ENCODE measurements at regions of chr3 and their contacts with region 1.

Region 1: GRCh38 chr3:181700168-181701087 is 11.3 kb upstream of the SOX2 start:
- DNase-seq: peak; percentile 87
- H3K4me3 ChIP-seq: peak overlapping the region in 1 of 2 experiments; percentile 8; a peak in 1 of 4 replicates
- H3K27ac ChIP-seq: no peak overlapping the region
- H3K4me1 ChIP-seq: peaks cover 0 to 11% of the 10 kb centered on the region in 2 experiments; a peak in 2 of 4 replicates
- H3K27me3 ChIP-seq: no peaks in the 10 kb centered on the region
- CTCF ChIP-seq: peak; percentile 87
- EP300 ChIP-seq: no peak
- RAD21 ChIP-seq: peak; percentile 87

Region 2: DNA sequence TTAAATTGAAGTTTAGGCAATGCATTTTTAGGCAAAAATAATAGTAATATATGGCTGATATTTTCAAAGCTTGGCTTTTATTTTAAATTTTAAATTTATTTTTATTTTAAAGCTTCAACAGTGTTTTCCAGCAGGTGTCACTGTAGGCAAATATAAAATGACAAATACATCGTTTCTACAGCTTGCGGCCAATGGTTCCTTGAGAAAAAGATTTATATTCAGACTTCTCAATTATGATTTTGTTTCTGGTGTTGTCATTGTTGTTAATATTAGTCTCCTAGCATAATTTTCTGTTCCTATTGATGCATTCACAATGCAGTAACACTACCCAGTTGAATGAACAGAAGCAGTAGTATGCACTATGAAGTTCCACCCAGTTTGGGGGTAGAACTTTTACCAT is 490.2 kb before region 1 on chr3:
- CTCF ChIA-PET with region 1: interaction called, 31 read pairs
- POLR2A ChIA-PET with region 1: no interaction called
- DNase-seq: peak; percentile 8
- H3K4me3 ChIP-seq: no peak overlapping the region
- H3K27ac ChIP-seq: no peak overlapping the region
- H3K4me1 ChIP-seq: no peaks in the 10 kb centered on the region; a peak in 1 of 4 replicates
- H3K27me3 ChIP-seq: no peaks in the 10 kb centered on the region
- CTCF ChIP-seq: peak; percentile 60
- EP300 ChIP-seq: no peak
- RAD21 ChIP-seq: peak; percentile 80

Region 3: DNA sequence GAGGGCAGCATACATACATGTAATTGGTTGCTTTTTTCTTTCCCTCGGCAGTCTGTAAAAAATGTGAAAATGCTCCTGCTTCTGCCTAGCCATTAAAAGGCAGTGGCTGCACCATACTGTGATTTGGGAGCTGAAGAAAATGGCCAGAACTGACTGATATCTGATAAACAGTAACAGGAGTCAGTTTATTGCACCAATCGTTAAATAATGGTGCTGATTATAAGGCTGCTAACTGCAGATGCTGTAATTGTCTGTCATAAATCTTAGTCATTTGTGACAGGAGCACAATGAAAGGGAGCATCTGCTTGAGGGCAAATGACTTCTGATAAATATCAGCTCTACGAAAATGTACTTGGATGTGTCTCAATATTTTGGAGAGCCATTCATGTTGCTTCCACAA is 447.8 kb before region 1 on chr3:
- CTCF ChIA-PET with region 1: interaction called, 18 read pairs
- POLR2A ChIA-PET with region 1: no interaction called
- DNase-seq: peak; percentile 68
- H3K4me3 ChIP-seq: no peak overlapping the region
- H3K27ac ChIP-seq: peak overlapping the region in 1 of 2 experiments; percentile 96; a peak in 2 of 4 replicates
- H3K4me1 ChIP-seq: peaks cover 0 to 13% of the 10 kb centered on the region in 2 experiments; a peak in 2 of 4 replicates
- H3K27me3 ChIP-seq: no peaks in the 10 kb centered on the region
- CTCF ChIP-seq: no peak
- EP300 ChIP-seq: peak in 1 of 2 experiments; percentile 98; a peak in 2 of 4 replicates
- RAD21 ChIP-seq: peak; percentile 26

Region 4: GRCh38 chr3:181326637-181327223 is 373.7 kb before region 1 on chr3:
- CTCF ChIA-PET with region 1: interaction called, 76 read pairs
- POLR2A ChIA-PET with region 1: no interaction called
- DNase-seq: no peak
- H3K4me3 ChIP-seq: no peak overlapping the region
- H3K27ac ChIP-seq: no peak overlapping the region
- H3K4me1 ChIP-seq: peaks cover 0 to 10% of the 10 kb centered on the region in 2 experiments; a peak in 2 of 4 replicates
- H3K27me3 ChIP-seq: no peaks in the 10 kb centered on the region
- CTCF ChIP-seq: peak; percentile 80
- EP300 ChIP-seq: no peak
- RAD21 ChIP-seq: peak; percentile 75

Region 5: DNA sequence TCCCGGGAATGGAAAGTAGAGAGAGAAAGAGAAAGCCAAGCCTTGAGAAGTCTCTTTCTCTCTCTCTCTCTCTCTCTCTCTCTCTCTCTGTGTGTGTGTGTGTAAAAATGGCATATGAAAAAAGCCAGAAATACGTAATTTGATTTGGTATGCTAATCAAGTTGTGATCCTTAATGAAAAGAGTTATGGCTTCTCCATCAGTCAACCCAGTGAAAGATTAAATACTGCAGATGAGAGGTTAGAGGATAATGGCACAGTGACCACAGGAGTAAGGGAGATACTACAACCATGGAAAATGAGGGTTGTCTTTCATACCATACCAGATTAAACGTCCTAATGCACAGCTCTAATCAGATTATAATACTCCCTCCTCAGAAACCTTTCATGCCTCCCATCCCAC is 182.2 kb before region 1 on chr3:
- CTCF ChIA-PET with region 1: interaction called, 11 read pairs
- POLR2A ChIA-PET with region 1: no interaction called
- DNase-seq: peak; percentile 45
- H3K4me3 ChIP-seq: no peak overlapping the region
- H3K27ac ChIP-seq: peak overlapping the region in 1 of 2 experiments; percentile 35; a peak in 2 of 4 replicates
- H3K4me1 ChIP-seq: peaks cover 0 to 6% of the 10 kb centered on the region in 2 experiments; a peak in 1 of 4 replicates
- H3K27me3 ChIP-seq: no peaks in the 10 kb centered on the region
- CTCF ChIP-seq: no peak
- EP300 ChIP-seq: peak in 1 of 2 experiments; percentile 76; a peak in 2 of 4 replicates
- RAD21 ChIP-seq: no peak

Region 6: GRCh38 chr3:181687190-181687589 is 13.2 kb before region 1 on chr3:
- CTCF ChIA-PET with region 1: interaction called, 35 read pairs
- POLR2A ChIA-PET with region 1: no interaction called
- DNase-seq: no peak
- H3K4me3 ChIP-seq: no peak overlapping the region
- H3K27ac ChIP-seq: no peak overlapping the region
- H3K4me1 ChIP-seq: no peaks in the 10 kb centered on the region; a peak in 1 of 4 replicates
- H3K27me3 ChIP-seq: no peaks in the 10 kb centered on the region
- CTCF ChIP-seq: no peak
- EP300 ChIP-seq: no peak
- RAD21 ChIP-seq: no peak

Region 7: DNA sequence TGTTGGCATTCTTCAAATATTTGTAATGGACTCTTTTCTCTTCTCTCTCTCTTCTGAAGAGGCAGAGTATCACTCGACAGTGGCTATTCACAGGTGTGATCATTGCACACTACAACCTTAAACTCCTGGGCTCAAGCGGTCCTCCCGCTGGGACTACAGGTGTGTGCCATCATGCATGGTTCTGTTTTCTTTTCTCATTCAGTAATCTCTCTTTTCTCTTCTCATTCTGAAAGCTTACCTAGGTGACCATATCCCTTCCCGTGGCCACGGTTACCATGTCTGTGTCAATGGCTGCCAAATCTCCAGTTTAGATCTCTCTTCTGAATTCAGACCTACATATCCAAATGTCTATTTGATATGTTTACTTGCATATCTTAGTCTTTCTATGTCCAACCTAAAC is 107.6 kb after region 1 on chr3:
- CTCF ChIA-PET with region 1: no interaction called
- POLR2A ChIA-PET with region 1: no interaction called
- DNase-seq: no peak
- H3K4me3 ChIP-seq: no peak overlapping the region
- H3K27ac ChIP-seq: no peak overlapping the region
- H3K4me1 ChIP-seq: no peaks in the 10 kb centered on the region
- H3K27me3 ChIP-seq: no peaks in the 10 kb centered on the region
- CTCF ChIP-seq: no peak
- EP300 ChIP-seq: no peak
- RAD21 ChIP-seq: no peak

Region 8: DNA sequence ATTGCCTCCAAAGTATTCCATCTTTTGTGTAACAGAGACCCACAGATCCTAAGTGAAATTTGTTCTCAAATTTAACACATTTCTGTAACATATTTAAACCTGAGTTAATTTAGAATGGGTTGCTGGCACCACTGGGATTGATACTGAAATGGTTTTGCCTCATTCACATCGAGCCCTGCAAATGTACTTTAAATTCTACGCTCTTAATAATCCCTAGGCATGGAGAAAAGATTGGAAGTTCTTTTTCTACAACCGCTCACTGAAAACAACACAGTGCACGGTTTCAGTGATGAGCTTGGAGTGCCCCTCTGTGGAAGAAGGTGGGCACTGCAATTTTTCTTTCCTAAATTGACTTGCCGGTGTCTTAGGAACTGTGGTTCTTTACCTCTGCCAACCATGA is 983.0 kb after region 1 on chr3:
- CTCF ChIA-PET with region 1: interaction called, 17 read pairs
- POLR2A ChIA-PET with region 1: no interaction called
- DNase-seq: peak; percentile 75
- H3K4me3 ChIP-seq: no peak overlapping the region; a peak in 1 of 4 replicates
- H3K27ac ChIP-seq: no peak overlapping the region
- H3K4me1 ChIP-seq: no peaks in the 10 kb centered on the region; a peak in 1 of 4 replicates
- H3K27me3 ChIP-seq: no peaks in the 10 kb centered on the region
- CTCF ChIP-seq: peak; percentile 96
- EP300 ChIP-seq: no peak
- RAD21 ChIP-seq: peak; percentile 98